Panc1 (cell line): ENCODE measurements at regions of chr11 and their contacts with region 1.

Region 1: GRCh38 chr11:3674189-3674588 is 3.0 kb upstream of the CHRNA10 start:
- DNase-seq: peak; percentile 82
- ATAC-seq: peak; percentile 65
- H3K4me3 ChIP-seq: no peak overlapping the region
- H3K27ac ChIP-seq: no peak overlapping the region
- H3K4me1 ChIP-seq: no peaks in the 10 kb centered on the region
- H3K27me3 ChIP-seq: no peaks in the 10 kb centered on the region
- CTCF ChIP-seq: no peak

Region 2: GRCh38 chr11:3732671-3733436 is 58.7 kb after region 1 on chr11:
- CTCF ChIA-PET with region 1: no interaction called
- POLR2A ChIA-PET with region 1: no interaction called
- in situ Hi-C with region 1: no loop called
- intact Hi-C with region 1: no loop called
- DNase-seq: no peak
- ATAC-seq: no peak
- H3K4me3 ChIP-seq: no peak overlapping the region
- H3K27ac ChIP-seq: no peak overlapping the region
- H3K4me1 ChIP-seq: no peaks in the 10 kb centered on the region
- H3K27me3 ChIP-seq: no peaks in the 10 kb centered on the region
- CTCF ChIP-seq: no peak

Region 3: DNA sequence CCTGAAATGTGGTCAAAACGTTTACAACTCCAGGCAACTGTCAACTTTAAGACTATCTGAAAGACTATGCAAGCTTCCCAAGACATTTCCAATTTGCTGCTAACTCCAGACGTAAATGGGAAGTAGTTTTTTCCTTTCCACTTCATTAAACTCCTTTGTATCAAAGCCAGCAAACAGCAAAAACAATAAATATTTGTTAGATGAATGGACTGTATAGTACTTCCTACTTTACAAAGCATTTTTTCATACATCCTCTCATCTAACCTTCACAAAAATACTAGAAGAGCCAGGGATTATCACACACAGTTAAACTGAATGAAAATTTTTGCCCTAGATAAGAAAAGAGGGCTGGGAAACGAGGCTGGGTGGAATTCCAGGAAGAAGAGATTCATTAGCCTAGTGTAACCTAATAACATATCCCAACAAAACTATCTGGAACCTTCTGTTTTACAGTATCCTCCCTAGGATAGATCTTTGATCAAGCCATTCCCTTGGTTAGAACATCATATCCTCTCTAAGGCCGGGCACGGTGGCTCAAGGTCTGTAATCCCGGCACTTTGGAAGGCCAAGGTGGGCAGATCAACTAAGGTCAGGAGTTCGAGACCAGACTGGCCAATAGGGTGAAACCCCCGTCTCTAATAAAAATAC is 112.7 kb after region 1 on chr11:
- CTCF ChIA-PET with region 1: no interaction called
- POLR2A ChIA-PET with region 1: no interaction called
- in situ Hi-C with region 1: no loop called
- intact Hi-C with region 1: no loop called
- DNase-seq: no peak
- ATAC-seq: no peak
- H3K4me3 ChIP-seq: no peak overlapping the region
- H3K27ac ChIP-seq: no peak overlapping the region
- H3K4me1 ChIP-seq: peaks cover 14% of the 10 kb centered on the region
- H3K27me3 ChIP-seq: no peaks in the 10 kb centered on the region
- CTCF ChIP-seq: no peak

Region 4: DNA sequence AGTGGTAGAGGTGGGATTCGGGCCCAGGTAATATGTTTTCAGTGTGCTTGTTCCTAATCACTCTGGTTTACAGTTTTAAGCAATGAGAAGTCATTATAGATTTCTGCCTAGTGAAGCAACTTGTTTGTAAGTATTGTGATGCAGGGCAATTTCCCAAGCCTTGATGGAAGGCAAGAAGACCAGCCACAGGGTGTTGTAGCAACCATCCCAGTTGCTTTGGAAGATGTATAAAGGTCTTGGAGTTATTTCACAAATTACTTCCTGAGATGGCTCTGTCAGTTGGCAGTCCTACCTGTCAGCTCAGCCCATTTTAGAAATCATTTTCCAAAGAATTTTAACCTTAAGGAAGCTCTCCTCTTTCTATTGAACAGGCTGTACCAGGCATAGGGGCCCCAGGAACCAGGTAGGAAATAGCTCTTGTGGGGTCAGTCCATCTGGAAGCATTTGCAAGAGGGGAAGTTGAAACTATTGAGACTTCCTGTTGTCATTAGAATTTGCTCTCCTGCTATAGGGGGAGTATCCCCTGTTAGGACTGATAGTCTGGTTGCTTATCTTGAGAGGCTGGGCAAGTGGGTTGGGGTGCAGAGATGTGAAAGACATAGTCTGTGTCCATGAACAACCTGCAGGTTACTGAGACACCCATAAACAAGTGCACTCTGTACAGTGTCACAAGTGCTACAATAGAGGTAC is 229.2 kb after region 1 on chr11:
- CTCF ChIA-PET with region 1: no interaction called
- POLR2A ChIA-PET with region 1: no interaction called
- in situ Hi-C with region 1: no loop called
- intact Hi-C with region 1: no loop called
- DNase-seq: no peak
- ATAC-seq: no peak
- H3K4me3 ChIP-seq: no peak overlapping the region
- H3K27ac ChIP-seq: 0 out of 2 replicates have a peak overlapping the region, but pooled peaks have one; percentile 5
- H3K4me1 ChIP-seq: peaks cover 43% of the 10 kb centered on the region
- H3K27me3 ChIP-seq: no peaks in the 10 kb centered on the region
- CTCF ChIP-seq: no peak

Region 5: DNA sequence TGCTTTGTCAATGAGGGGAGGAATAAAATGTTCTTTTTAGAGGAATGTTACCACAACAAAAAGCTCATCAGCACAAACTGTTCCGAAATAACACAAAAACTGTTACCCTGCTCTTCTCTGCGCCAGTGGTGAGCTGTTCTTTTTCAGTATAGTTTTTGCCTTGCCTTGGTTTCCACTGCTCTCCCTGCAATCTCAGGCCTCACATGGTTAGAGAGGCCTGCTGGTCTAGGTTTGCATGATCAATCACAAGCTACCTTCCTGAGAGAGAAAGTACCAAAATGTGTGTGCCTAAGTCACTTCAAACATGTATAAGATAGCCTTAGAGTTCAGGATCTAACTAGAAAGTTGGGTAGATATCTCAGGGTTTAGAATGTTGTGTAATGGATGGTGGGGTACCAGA is 295.9 kb after region 1 on chr11:
- CTCF ChIA-PET with region 1: no interaction called
- POLR2A ChIA-PET with region 1: interaction called, 10 read pairs
- in situ Hi-C with region 1: no loop called
- intact Hi-C with region 1: no loop called
- DNase-seq: no peak
- ATAC-seq: no peak
- H3K4me3 ChIP-seq: no peak overlapping the region
- H3K27ac ChIP-seq: no peak overlapping the region
- H3K4me1 ChIP-seq: no peaks in the 10 kb centered on the region
- H3K27me3 ChIP-seq: no peaks in the 10 kb centered on the region
- CTCF ChIP-seq: no peak